Activated CD4-positive, alpha-beta T cell treated with anti-CD3 and anti-CD28 coated beads, Interleukin-2, amount 10 ng/mL, durations not matched to agents 24 days and 14 days (primary cell): ENCODE measurements at regions of chr2 and their contacts with region 1.

Region 1: GRCh38 chr2:44479122-44479887 is 117.6 kb downstream of the CAMKMT start:
- DNase-seq: peak; percentile 86
- H3K4me3 Mint-ChIP-seq: no peak overlapping the region
- H3K27ac Mint-ChIP-seq: no peak overlapping the region
- H3K4me1 Mint-ChIP-seq: peaks cover 3% of the 10 kb centered on the region
- H3K27me3 Mint-ChIP-seq: no peaks in the 10 kb centered on the region

Region 2: DNA sequence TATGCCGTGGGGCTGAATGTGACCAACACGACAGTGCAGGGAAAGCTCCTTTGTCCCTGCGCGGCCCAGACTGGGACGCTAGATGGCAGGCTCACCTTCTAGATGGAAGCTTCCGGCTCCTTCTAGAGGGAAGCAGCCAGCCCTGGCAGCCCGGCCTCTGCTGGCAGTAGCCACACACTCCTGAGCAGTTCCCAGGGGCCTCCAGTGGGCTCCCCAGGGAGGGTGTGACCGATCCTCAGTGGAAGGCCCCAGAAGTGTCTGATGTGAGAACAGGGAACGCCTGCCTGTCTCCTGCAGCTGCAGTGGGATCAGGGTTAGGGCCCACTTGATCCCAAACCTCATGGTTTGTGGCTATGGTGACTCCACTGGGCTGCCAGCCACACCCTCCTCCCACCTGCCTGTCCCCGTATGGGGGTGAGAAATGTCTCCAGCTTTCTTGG is 435.0 kb before region 1 on chr2:
- intact Hi-C with region 1: loop called (anchors 2 kb)
- DNase-seq: peak; percentile 94
- H3K4me3 Mint-ChIP-seq: no peak overlapping the region
- H3K27ac Mint-ChIP-seq: no peak overlapping the region
- H3K4me1 Mint-ChIP-seq: no peaks in the 10 kb centered on the region
- H3K27me3 Mint-ChIP-seq: peaks cover 9% of the 10 kb centered on the region

Region 3: DNA sequence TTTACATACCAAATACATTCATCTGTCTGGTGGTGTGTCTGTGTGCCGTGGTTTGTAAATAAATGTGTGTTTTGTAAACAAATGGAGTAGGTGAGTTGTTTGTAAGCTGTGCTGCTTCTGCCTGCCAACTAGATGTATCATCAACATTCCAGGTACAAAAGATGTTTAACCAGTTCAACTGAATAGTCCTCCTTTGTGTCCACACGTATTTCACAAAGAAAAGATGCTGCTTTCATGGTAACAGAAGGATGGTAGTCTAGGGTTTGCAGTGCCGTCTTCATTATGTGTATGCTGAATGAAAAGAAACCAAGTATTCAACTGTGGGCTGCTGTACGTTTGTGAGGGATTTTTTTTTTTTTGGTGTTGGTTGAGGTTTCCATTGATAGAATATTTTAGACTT is 45.4 kb before region 1 on chr2:
- intact Hi-C with region 1: no loop called
- DNase-seq: no peak
- H3K4me3 Mint-ChIP-seq: no peak overlapping the region
- H3K27ac Mint-ChIP-seq: no peak overlapping the region
- H3K4me1 Mint-ChIP-seq: no peaks in the 10 kb centered on the region
- H3K27me3 Mint-ChIP-seq: no peaks in the 10 kb centered on the region

Region 4: GRCh38 chr2:44462934-44463849 is 16.1 kb before region 1 on chr2:
- intact Hi-C with region 1: no loop called
- DNase-seq: no peak
- H3K4me3 Mint-ChIP-seq: no peak overlapping the region
- H3K27ac Mint-ChIP-seq: no peak overlapping the region
- H3K4me1 Mint-ChIP-seq: no peaks in the 10 kb centered on the region
- H3K27me3 Mint-ChIP-seq: peaks cover 8% of the 10 kb centered on the region

Region 5: DNA sequence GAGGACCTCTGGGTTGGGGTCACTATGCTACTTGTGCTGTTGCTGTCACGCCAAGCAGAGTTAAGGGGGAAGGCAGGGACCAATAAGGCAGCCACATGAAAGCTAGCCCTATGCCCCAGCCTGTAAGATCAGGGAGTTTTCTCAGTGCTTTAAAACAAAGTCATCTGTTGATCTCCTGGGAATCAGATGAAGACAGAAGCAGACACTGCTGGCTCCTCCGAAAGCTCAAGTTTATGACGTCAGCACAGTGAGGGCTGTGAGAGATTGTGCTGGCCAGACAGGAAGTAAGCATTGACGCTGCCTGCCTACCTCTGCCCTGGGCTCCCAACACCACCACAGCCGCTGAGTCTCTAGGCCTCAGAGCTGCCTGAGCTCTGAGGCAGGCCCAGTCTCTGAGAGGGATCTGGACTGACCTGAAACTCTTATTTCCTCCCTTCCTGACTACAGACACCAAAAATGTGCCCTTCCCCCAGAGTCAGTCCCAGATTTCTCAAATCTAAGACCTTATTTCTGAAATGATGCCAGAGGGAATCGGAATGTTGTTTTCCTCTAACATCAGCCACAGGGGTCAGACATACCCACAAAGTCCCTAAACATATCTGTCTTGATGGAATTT is 1699.8 kb after region 1 on chr2:
- intact Hi-C with region 1: no loop called
- DNase-seq: peak; percentile 88
- H3K4me3 Mint-ChIP-seq: peak overlapping the region; percentile 27
- H3K27ac Mint-ChIP-seq: peak overlapping the region; percentile 84
- H3K4me1 Mint-ChIP-seq: peaks cover 20% of the 10 kb centered on the region
- H3K27me3 Mint-ChIP-seq: no peaks in the 10 kb centered on the region